Head of caudate nucleus (tissue), 42 donors: ENCODE measurements at regions of chr7 and their contacts with region 1.

Region 1: DNA sequence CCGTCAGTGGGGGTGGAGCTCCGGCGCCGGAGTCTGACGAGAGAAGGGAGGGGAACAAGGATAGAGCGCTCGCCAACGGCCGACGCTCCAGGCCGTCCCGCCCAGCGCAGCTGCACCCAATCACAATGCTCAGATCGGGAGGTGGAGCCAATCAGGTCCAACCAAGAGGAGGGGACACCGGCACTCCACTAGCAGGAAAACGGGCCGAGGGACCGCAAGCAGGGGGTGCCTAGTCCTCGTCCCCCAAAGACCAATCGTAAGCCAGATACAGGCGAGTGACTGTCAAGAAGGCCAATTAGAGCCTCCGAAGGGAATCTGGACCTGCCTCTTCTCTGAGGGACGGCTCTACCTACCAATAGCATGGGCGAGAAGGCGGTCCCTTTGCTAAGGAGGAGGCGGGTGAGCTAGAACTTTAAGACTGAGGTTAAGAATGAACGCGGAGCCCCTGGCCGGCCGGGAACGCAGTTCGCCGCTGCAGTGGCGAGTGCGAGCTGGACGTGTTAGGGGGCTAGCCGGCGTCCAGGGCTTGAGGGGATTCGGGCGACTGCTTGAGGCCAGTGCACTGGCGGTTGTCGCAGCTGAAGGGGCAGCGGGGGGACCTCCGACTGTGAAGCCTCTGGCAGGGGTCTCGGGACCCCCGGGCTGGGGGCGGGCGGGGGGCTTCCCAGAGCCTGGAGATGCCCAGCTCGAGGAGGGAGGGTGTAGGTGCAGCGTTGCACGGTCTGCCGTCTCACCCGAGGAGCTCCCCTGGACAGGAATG is at the start of gene FBXO24:
- DNase-seq: peak; percentile 99 to 100 (median 100)

Region 2: DNA sequence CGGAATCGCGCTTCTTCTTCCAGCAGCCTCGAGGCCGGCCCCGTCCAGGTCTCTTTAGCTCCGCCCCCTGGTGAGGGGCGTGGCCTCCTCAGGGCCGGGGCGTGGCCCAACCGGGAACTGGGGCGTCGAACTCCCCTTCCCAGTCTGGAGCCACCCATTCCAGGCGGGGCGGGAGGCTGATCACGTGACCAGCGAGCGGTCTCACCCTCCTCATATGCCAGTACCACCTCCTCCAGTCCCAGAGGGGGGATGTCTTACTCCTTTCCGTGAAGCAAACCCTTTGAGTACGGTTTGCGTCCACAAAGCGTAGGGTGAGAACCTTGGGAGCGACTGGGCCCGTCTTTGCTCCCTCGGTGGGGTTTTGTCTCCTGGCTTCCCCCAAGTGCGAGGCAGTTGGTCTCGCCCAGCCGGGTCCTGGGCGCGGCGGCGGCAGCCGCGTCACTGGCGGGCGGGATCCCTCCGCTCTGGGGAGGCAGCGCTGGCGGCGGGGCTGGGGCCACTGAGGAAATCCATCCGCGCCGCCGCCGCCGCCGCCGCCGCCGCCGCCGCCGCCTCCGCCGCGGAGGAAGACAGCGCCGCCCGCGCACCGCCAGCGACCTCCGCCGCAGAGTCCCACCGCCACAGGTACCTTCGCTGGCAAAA is 87.0 kb after region 1 on chr7 and contains the start of gene GNB2:
- intact Hi-C with region 1: loop called (anchors 2 kb)
- DNase-seq: peak; percentile 99 to 100 (median 99)